ENCODE measurements at regions of chr18 and their contacts with region 1.

Region 1: GRCh38 chr18:623761-624620 is 27.2 kb downstream of the CLUL1 start:
- DNase-seq: peak; percentile 40 to 69 (median 64)
- ATAC-seq: peak in 3 of 4 donors; percentile 69 to 80 (median 70)
- H3K4me3 ChIP-seq: no peak overlapping the region
- H3K27ac ChIP-seq: no peak overlapping the region
- H3K4me1 ChIP-seq: no peaks in the 10 kb centered on the region
- H3K27me3 ChIP-seq: peaks cover 0 to 8% (median 0%) of the 10 kb centered on the region in 9 donors
- CTCF ChIP-seq: peak; percentile 59 to 81 (median 74)
- POLR2A ChIP-seq: no peak

Region 2: GRCh38 chr18:567122-567521 is 56.9 kb before region 1 on chr18:
- intact Hi-C with region 1: no loop called
- DNase-seq: no peak
- ATAC-seq: no peak
- H3K4me3 ChIP-seq: no peak overlapping the region
- H3K27ac ChIP-seq: no peak overlapping the region
- H3K4me1 ChIP-seq: peaks cover 0 to 11% (median 0%) of the 10 kb centered on the region in 12 donors
- H3K27me3 ChIP-seq: no peaks in the 10 kb centered on the region
- CTCF ChIP-seq: no peak
- POLR2A ChIP-seq: no peak

Region 3: GRCh38 chr18:703213-703967 is 79.4 kb after region 1 on chr18:
- intact Hi-C with region 1: loop called in 1 of 10 experiments (anchors 10 kb)
- DNase-seq: no peak
- ATAC-seq: peak in 1 of 4 donors; percentile 32
- H3K4me3 ChIP-seq: no peak overlapping the region
- H3K27ac ChIP-seq: peak overlapping the region in 1 of 12 donors; percentile 70
- H3K4me1 ChIP-seq: no peaks in the 10 kb centered on the region
- H3K27me3 ChIP-seq: no peaks in the 10 kb centered on the region
- CTCF ChIP-seq: no peak
- POLR2A ChIP-seq: no peak

Region 4: GRCh38 chr18:712401-713134 is 88.6 kb after region 1 on chr18 and contains the start of gene ENOSF1:
- intact Hi-C with region 1: loop called in 2 of 10 experiments (anchors 10 kb)
- DNase-seq: peak; percentile 80 to 90 (median 85)
- ATAC-seq: peak; percentile 73 to 97 (median 94)
- H3K4me3 ChIP-seq: peak within 1 kb of the TSS; percentile 47 to 89 (median 65)
- H3K27ac ChIP-seq: peak within 1 kb of the TSS in 11 of 12 donors; percentile 54 to 88 (median 75)
- H3K4me1 ChIP-seq: peaks cover 0 to 26% (median 12%) of the 10 kb centered on the region in 12 donors
- H3K27me3 ChIP-seq: no peaks in the 10 kb centered on the region
- CTCF ChIP-seq: peak; percentile 63 to 91 (median 81)
- POLR2A ChIP-seq: peak in 1 of 2 donors; percentile 20
- total RNA-seq, gene ENOSF1: 14.1 to 38.7 (median 22.2) TPM

Region 5: GRCh38 chr18:741931-742512 is 118.0 kb after region 1 on chr18:
- intact Hi-C with region 1: loop called in 1 of 10 experiments (anchors 5 kb)
- DNase-seq: no peak
- ATAC-seq: peak; percentile 20 to 82 (median 74)
- H3K4me3 ChIP-seq: no peak overlapping the region
- H3K27ac ChIP-seq: peak overlapping the region in 1 of 12 donors; percentile 9
- H3K4me1 ChIP-seq: peaks cover 0 to 4% (median 0%) of the 10 kb centered on the region in 12 donors
- H3K27me3 ChIP-seq: no peaks in the 10 kb centered on the region
- CTCF ChIP-seq: peak; percentile 73 to 86 (median 79)
- POLR2A ChIP-seq: no peak

Region 6: GRCh38 chr18:830315-830901 is 206.4 kb after region 1 on chr18:
- intact Hi-C with region 1: loop called in 7 of 10 experiments (anchors 1 to 5 kb)
- DNase-seq: peak in 3 of 5 donors; percentile 35 to 51 (median 40)
- ATAC-seq: peak; percentile 68 to 92 (median 82)
- H3K4me3 ChIP-seq: peak overlapping the region in 1 of 12 donors; percentile 13
- H3K27ac ChIP-seq: peak overlapping the region; percentile 13 to 86 (median 65)
- H3K4me1 ChIP-seq: peaks cover 0 to 19% (median 6%) of the 10 kb centered on the region in 12 donors
- H3K27me3 ChIP-seq: peaks cover 0 to 14% (median 0%) of the 10 kb centered on the region in 9 donors
- CTCF ChIP-seq: no peak
- POLR2A ChIP-seq: no peak

Region 7: GRCh38 chr18:839224-840022 is 215.4 kb after region 1 on chr18:
- intact Hi-C with region 1: loop called in 8 of 10 experiments (anchors 2 to 5 kb)
- DNase-seq: peak; percentile 79 to 91 (median 84)
- ATAC-seq: peak; percentile 77 to 97 (median 94)
- H3K4me3 ChIP-seq: no peak overlapping the region
- H3K27ac ChIP-seq: no peak overlapping the region
- H3K4me1 ChIP-seq: peaks cover 0 to 10% (median 0%) of the 10 kb centered on the region in 12 donors
- H3K27me3 ChIP-seq: no peaks in the 10 kb centered on the region
- CTCF ChIP-seq: peak; percentile 93 to 99 (median 97)
- POLR2A ChIP-seq: no peak

Region 8: DNA sequence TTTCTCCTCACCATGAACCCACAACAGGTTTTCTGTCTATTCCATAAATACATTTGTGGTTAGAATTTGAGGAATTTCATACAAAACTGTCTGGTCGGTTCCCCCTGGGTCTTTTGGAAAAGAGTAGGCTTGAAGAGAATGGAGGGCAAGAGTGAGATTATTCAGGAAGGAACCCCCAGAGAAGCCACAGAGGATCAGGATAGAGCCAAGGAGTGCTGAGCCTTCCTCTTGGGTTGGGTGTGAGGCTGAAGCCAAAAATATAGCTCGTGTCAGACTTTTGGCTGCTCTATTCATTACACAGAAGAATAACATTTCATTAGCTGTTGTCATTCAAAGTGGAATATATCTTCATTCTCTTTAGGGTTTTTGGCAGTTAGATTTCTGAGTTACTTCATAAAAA is 234.0 kb after region 1 on chr18:
- intact Hi-C with region 1: no loop called
- DNase-seq: no peak
- ATAC-seq: peak in 1 of 4 donors; percentile 39
- H3K4me3 ChIP-seq: no peak overlapping the region
- H3K27ac ChIP-seq: no peak overlapping the region
- H3K4me1 ChIP-seq: no peaks in the 10 kb centered on the region
- H3K27me3 ChIP-seq: peaks cover 0 to 5% (median 0%) of the 10 kb centered on the region in 9 donors
- CTCF ChIP-seq: no peak
- POLR2A ChIP-seq: no peak

Region 9: GRCh38 chr18:911025-911424 is 287.0 kb after region 1 on chr18:
- intact Hi-C with region 1: no loop called
- DNase-seq: no peak
- ATAC-seq: no peak
- H3K4me3 ChIP-seq: no peak overlapping the region
- H3K27ac ChIP-seq: no peak overlapping the region
- H3K4me1 ChIP-seq: peaks cover 5 to 35% (median 28%) of the 10 kb centered on the region in 12 donors
- H3K27me3 ChIP-seq: peaks cover 36 to 85% (median 52%) of the 10 kb centered on the region in 9 donors
- CTCF ChIP-seq: no peak
- POLR2A ChIP-seq: no peak

Measured in heart left ventricle (tissue), 16 donors.